Activated CD4-positive, alpha-beta T cell treated with anti-CD3 and anti-CD28 coated beads for 36 hours (primary cell): ENCODE measurements at regions of chr12 and their contacts with region 1.

Region 1: DNA sequence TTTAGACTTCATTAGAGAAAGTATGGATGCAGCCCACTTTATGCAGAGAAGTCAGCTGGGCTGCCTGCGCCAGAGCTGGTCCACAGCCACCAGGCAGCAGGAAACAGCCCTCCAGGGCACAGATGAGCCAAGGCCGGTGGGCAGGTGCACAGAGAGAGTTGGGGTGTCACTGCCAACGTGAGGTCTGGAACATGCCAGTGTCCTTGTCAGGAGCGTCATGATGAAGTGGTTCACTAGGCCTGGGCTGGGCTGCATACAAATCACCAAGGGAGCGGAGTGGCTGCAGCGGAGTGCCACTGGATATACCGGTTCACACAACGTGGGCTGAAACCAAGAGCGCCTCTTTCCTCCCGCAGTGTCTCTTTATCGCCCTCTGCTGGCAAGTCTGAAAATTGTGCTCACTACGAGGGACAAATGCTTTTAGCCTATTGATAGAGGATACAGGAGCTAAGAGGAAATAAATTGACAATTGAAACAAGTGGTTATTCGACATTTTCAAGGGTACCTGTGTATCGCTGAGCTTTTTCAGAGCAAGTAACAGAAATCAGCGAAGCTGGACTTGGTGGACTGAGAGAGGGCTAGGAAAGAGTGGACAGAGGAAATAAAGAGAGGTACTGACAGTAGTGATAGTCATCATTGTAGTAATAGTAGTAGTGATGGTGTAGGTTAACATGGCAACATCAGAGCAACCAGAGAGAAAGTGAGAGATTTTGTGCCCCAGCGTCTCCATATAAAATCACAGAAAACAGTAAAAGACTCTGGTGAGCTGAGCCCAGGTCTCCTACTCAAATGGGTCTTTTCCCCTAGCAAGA is 52.0 kb upstream of the ITPR2 start:
- DNase-seq: peak; percentile 89
- ATAC-seq: peak; percentile 97
- H3K4me3 Mint-ChIP-seq: peak overlapping the region; percentile 49
- H3K27ac Mint-ChIP-seq: no peak overlapping the region
- H3K4me1 Mint-ChIP-seq: peaks cover 10% of the 10 kb centered on the region
- H3K27me3 Mint-ChIP-seq: peaks cover 2% of the 10 kb centered on the region

Region 2: DNA sequence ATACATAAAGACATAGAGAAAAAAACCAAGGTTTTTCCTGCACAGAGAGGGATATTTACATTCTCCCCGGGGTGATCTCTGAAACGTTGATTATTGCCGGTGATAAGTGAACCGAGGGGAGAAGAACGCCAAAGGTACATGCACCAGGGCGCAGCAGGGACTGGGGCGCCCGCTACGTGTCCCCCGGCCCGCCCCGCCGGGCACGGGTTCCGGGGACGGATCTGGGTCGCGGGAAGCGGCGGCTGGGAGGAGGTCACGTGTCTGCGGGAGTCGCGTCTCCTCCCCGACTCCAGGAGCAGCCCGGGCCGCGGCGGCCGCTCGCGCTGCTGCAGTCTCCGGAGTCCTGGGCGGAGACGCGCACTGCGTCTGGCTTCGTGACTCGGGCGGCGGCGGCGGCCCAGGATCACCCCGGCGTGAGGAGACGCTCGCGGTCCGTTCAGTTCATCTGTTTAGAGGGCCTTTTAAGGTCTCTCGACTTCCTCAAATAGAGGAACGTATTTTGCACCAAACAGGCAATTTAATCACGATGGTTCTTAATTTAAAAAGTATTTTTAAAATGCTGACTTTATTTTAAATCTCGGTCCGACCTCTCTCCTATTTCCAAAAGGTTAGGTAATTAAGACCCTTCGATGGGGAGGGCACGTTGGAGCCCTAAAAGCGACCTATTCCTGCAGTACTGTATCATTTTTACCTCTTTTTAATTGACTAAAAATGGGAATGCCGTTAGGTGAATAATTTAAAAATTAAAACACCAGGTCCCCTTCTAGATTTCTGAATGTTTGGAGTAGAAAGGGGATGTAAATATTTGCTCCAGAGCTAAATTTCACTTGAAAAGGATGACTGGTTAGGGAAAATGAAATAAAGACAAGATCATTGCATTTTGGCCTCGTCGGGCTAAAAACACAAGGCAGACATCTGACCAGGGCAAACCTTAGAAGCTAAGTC is 758.4 kb before region 1 on chr12:
- CTCF ChIA-PET with region 1: no interaction called
- POLR2A ChIA-PET with region 1: no interaction called
- intact Hi-C with region 1: loop called in 1 of 2 experiments (anchors 10 kb)
- DNase-seq: peak; percentile 70
- ATAC-seq: peak; percentile 55
- H3K4me3 Mint-ChIP-seq: peak overlapping the region; percentile 77
- H3K27ac Mint-ChIP-seq: no peak overlapping the region
- H3K4me1 Mint-ChIP-seq: peaks cover 26% of the 10 kb centered on the region
- H3K27me3 Mint-ChIP-seq: peaks cover 72% of the 10 kb centered on the region

Region 3: GRCh38 chr12:26798023-26798422 is 86.9 kb before region 1 on chr12:
- CTCF ChIA-PET with region 1: no interaction called
- POLR2A ChIA-PET with region 1: no interaction called
- intact Hi-C with region 1: no loop called
- DNase-seq: no peak
- ATAC-seq: no peak
- H3K4me3 Mint-ChIP-seq: no peak overlapping the region
- H3K27ac Mint-ChIP-seq: peak overlapping the region; percentile 1
- H3K4me1 Mint-ChIP-seq: peaks cover 23% of the 10 kb centered on the region
- H3K27me3 Mint-ChIP-seq: no peaks in the 10 kb centered on the region

Region 4: GRCh38 chr12:26853303-26854030 is 31.5 kb before region 1 on chr12:
- CTCF ChIA-PET with region 1: interaction called, 35 read pairs
- POLR2A ChIA-PET with region 1: no interaction called
- intact Hi-C with region 1: loop called (anchors 1 kb)
- DNase-seq: peak; percentile 84
- ATAC-seq: peak; percentile 93
- H3K4me3 Mint-ChIP-seq: no peak overlapping the region
- H3K27ac Mint-ChIP-seq: no peak overlapping the region
- H3K4me1 Mint-ChIP-seq: no peaks in the 10 kb centered on the region
- H3K27me3 Mint-ChIP-seq: peaks cover 1% of the 10 kb centered on the region

Region 5: GRCh38 chr12:26896913-26897312 is 11.9 kb after region 1 on chr12:
- CTCF ChIA-PET with region 1: interaction called, 10 read pairs
- POLR2A ChIA-PET with region 1: no interaction called
- intact Hi-C with region 1: no loop called
- DNase-seq: no peak
- ATAC-seq: no peak
- H3K4me3 Mint-ChIP-seq: no peak overlapping the region
- H3K27ac Mint-ChIP-seq: no peak overlapping the region
- H3K4me1 Mint-ChIP-seq: peaks cover 5% of the 10 kb centered on the region
- H3K27me3 Mint-ChIP-seq: no peaks in the 10 kb centered on the region